Right ventricle myocardium inferior (tissue), 1 donor: ENCODE measurements at regions of chr12 and their contacts with region 1.

Region 1: GRCh38 chr12:47317175-47317915 is 237.6 kb upstream of the AMIGO2 start:
- DNase-seq: no peak
- ATAC-seq: no peak

Region 2: DNA sequence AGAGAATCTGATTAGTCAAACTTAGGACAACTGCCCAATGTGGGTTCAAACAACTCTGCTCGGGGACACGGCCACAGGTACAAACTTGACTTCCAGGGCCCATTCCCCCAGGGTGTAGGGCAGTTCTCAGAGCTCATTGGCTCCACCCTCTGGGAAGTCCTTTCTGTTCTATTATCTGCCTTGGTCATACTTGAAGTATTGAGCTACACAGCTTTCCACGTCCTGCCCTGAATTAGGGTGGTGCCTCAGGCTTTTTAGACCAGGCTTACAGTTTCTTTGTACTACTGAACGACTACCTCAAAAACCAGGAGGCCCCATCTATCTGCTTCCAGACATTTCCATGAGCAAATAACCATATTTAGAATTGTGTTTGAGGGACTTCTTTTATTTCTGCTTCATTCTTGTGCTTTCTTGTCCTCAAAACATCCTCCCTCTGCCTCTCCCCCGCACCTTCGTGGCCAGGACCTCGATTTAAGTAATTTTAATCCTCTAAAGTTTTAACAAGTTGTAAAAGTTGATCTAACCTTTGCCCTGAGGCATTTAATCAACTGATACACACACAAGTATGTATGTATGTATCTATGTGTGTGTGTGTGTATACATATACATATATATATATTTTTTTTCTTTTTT is 44.2 kb after region 1 on chr12:
- intact Hi-C with region 1: loop called (anchors 5 kb)
- DNase-seq: no peak
- ATAC-seq: peak; percentile 62